ENCODE measurements at regions of chr7 and their contacts with region 1.

Region 1: GRCh38 chr7:322111-322671 is 32.2 kb downstream of the FOXL3 start:
- DNase-seq: peak; percentile 27 to 55 (median 39)
- H3K4me3 ChIP-seq: no peak overlapping the region
- H3K4me3 Mint-ChIP-seq: peak overlapping the region in 1 of 2 donors; percentile 15
- H3K27ac ChIP-seq: no peak overlapping the region
- H3K27ac Mint-ChIP-seq: no peak overlapping the region
- H3K4me1 ChIP-seq: peaks cover 0 to 8% of the 10 kb centered on the region in 2 donors
- H3K4me1 Mint-ChIP-seq: peaks cover 7% of the 10 kb centered on the region
- H3K27me3 ChIP-seq: no peaks in the 10 kb centered on the region
- H3K27me3 Mint-ChIP-seq: peaks cover 8 to 21% (median 16%) of the 10 kb centered on the region in 3 donors
- CTCF ChIP-seq: peak; percentile 99

Region 2: GRCh38 chr7:636396-636795 is 314.2 kb after region 1 on chr7:
- intact Hi-C with region 1: loop called (anchors 5 kb)
- DNase-seq: peak; percentile 11 to 39 (median 23)
- H3K4me3 ChIP-seq: no peak overlapping the region
- H3K4me3 Mint-ChIP-seq: no peak overlapping the region
- H3K27ac ChIP-seq: no peak overlapping the region
- H3K27ac Mint-ChIP-seq: peak overlapping the region in 2 of 7 donors; percentile 50 to 66
- H3K4me1 ChIP-seq: no peaks in the 10 kb centered on the region
- H3K4me1 Mint-ChIP-seq: no peaks in the 10 kb centered on the region
- H3K27me3 ChIP-seq: no peaks in the 10 kb centered on the region
- H3K27me3 Mint-ChIP-seq: peaks cover 1 to 4% (median 2%) of the 10 kb centered on the region in 3 donors
- CTCF ChIP-seq: peak; percentile 39

Region 3: DNA sequence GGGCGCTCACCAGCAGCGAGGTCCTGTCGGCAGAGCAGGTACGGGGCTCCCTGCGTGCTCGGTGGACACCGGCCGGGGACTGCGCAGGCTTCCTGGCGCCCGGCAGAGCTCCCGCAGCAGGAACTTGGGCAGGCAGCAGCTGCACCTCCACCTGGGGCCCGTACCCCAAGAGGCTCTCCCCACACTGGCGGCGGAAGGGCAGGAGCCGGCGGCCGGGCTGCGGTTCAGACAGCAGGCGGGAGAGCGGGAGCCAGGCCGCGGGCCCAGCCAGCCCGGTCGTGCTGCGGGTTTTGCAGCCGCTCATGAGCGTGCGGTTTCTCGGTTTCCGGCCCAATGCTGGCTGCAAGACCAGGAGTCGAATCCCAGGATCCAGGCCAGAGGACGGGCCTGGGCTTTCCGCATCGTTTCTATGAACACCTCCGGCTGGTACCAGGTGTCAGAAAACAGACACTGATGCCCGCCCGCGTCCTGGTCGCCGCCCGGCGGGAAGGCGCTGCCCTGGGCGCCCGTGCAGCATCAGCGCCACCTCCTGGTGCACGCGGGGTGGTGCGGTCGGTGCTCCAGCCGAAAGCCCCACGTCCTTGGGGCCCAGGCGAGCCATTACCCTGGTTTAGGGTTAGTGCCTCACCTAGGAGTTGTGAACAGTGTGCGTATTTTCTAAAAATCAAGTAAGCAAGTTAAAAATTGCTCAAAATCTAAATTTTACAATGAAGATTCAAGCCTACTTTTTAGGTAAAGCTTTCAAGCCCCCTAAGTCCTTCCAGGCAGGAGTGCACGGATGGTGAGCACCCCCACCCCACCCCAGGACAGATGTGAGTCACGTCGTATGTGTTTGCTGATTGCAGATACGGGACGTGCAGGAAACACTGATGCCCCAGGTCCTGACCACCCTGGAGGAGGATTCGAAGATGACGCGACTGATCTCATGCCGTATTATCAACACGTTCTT is 452.2 kb after region 1 on chr7:
- intact Hi-C with region 1: loop called (anchors 2 to 5 kb)
- DNase-seq: peak; percentile 3 to 21 (median 15)
- H3K4me3 ChIP-seq: no peak overlapping the region
- H3K4me3 Mint-ChIP-seq: no peak overlapping the region
- H3K27ac ChIP-seq: no peak overlapping the region
- H3K27ac Mint-ChIP-seq: no peak overlapping the region
- H3K4me1 ChIP-seq: no peaks in the 10 kb centered on the region
- H3K4me1 Mint-ChIP-seq: no peaks in the 10 kb centered on the region
- H3K27me3 ChIP-seq: no peaks in the 10 kb centered on the region
- H3K27me3 Mint-ChIP-seq: peaks cover 0 to 2% (median 0%) of the 10 kb centered on the region in 3 donors
- CTCF ChIP-seq: peak; percentile 88

Measured in CD14-positive monocyte (primary cell).